SK-MEL-5 (cell line): ENCODE measurements at regions of chr2 and their contacts with region 1.

Region 1: DNA sequence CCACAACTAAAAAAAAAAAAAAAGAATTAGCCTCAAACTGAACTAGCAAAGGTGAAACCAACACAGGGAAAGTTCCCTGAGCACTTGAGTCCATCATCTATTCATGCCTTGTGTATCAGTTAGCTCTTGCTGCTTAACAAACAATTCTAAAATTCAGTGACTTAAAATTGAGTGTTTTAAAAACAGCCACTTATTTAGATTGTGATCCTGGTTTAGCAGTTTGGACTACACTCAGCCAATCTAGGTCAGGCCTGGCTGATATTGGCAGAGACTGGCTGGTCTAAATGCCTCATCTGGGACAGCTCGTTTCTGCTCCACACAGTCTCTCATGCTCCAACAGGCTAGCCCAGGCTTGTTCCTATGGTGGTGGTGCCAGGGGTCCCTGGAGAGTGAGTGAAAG is 247.9 kb downstream of the ATAD2B start:
- DNase-seq: no peak

Region 2: GRCh38 chr2:23636426-23636825 is 42.6 kb before region 1 on chr2:
- in situ Hi-C with region 1: loop called (anchors 5 kb)
- DNase-seq: peak; percentile 15

Region 3: DNA sequence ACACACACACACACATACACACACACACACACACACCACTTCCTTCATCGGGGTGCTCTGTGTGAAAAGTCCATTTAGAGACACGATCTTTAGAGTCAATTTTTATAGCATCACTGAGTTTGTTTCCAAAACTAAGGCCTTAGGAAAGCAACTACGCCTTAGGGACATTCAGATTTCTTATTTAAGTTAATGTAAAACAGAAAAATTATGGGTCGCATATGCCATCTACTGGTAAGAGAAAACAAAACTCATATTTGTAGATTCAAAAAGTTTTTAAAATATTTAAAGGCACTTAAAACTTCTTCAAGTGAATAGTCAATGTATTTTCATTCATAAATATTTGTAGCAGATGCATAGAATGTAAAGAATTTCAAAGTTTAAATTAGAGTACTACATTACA is 81.7 kb after region 1 on chr2:
- in situ Hi-C with region 1: no loop called
- DNase-seq: peak; percentile 53